ENCODE measurements at regions of chr3 and their contacts with region 1.

Region 1: DNA sequence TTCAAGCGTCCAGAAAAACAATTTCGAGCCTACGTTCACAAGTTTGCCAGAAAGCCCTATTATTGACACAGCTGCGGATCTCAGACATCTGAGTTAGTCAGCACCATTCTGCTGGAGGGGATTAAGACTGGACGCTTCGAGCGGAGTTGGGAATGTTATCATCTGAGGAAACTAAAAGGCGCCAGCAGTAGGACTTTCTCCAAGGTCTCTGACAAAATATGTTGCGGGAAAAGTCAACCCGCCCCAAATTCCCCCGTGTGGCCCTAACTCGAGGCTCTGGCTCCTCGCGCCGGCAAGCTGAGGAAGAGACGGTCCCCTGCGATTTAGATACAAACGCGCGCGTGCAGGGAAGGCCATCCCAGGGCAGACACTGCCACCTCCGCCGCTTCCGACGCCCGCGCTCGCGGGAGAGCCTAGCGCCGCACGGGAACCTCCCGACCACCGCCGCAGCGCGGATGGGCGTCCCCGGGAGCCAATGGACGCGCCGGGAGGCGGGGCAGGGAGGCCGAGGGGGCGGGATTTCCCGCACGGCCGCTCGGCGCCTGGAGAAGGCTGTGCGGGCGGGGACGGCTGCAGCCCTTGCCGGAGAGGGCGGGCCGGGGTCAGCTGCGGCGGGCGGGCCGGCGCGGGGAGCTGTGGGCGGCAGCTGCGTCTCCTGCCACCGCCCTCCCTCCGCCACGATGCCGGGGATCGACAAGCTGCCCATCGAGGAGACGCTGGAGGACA is at the start of gene APPL1:
- DNase-seq: peak; percentile 61 to 93 (median 84)
- ATAC-seq: peak; percentile 88
- H3K4me3 ChIP-seq: peak within 1 kb of the TSS; percentile 80
- H3K4me3 Mint-ChIP-seq: peak within 1 kb of the TSS; percentile 95
- H3K27ac ChIP-seq: no peak within 1 kb of the TSS
- H3K27ac Mint-ChIP-seq: peak within 1 kb of the TSS; percentile 82
- H3K4me1 ChIP-seq: peaks cover 10% of the 10 kb centered on the region
- H3K4me1 Mint-ChIP-seq: peaks cover 33% of the 10 kb centered on the region
- H3K27me3 ChIP-seq: no peaks in the 10 kb centered on the region
- H3K27me3 Mint-ChIP-seq: no peaks in the 10 kb centered on the region
- CTCF ChIP-seq: no peak
- total RNA-seq, gene APPL1: 21.3 to 22.9 TPM

Region 2: GRCh38 chr3:56693750-56694149 is 533.6 kb before region 1 on chr3:
- CTCF ChIA-PET with region 1: no interaction called
- POLR2A ChIA-PET with region 1: no interaction called
- intact Hi-C with region 1: loop called in 1 of 2 experiments (anchors 2 kb)
- DNase-seq: peak in 3 of 14 experiments; percentile 30 to 34 (median 32)
- ATAC-seq: no peak
- H3K4me3 ChIP-seq: no peak overlapping the region
- H3K4me3 Mint-ChIP-seq: peak overlapping the region; percentile 61
- H3K27ac ChIP-seq: peak overlapping the region; percentile 16 to 42
- H3K27ac Mint-ChIP-seq: peak overlapping the region; percentile 76
- H3K4me1 ChIP-seq: peaks cover 30% of the 10 kb centered on the region
- H3K4me1 Mint-ChIP-seq: peaks cover 44% of the 10 kb centered on the region
- H3K27me3 ChIP-seq: no peaks in the 10 kb centered on the region
- H3K27me3 Mint-ChIP-seq: no peaks in the 10 kb centered on the region
- CTCF ChIP-seq: no peak

Region 3: DNA sequence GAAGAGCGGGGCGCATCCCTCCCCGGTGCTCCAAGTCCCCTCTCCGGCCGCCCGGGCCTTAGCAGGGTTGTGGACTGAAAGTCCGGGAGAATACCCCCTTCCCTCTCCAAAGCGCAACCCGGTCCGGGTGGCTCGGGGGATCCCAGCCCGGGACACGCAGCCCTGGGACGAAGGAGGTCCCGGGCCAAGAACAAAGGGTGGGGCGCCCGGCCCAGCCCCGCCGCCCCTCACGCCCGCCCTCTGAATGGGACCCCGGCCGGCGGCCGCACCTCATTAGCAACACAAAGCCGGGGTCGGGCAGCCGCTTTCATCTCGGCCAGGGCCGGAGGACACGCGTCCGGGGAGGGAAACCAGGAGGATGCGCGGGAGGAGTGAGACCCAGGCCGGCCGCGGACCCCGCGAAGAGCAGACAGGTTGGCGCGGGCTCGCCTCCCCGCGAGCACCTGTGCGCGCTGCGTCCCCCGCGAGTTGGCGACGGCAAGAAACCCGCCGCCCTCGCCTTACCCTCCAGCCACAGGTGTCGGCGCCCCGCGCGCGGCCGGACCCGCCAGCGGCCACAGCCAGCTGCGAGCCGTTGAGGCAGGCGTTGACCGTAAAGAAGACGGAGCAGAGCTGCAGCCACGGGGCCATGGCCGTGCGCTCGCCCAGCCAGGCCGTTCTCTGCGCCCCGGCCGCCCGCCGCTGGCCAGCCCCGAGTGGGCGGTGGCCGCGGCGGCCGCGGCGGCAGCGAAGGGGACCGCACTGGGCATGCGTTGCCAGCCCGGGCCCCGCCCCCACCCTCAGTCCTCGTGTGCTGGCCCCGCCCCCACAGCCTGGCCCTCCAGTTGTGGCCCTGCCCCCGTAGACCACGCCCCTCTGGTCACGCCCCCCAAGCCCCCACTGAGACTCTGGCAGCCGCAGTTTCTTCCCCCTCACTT is 62.5 kb before region 1 on chr3 and contains the start of gene IL17RD:
- CTCF ChIA-PET with region 1: no interaction called
- POLR2A ChIA-PET with region 1: no interaction called
- intact Hi-C with region 1: no loop called
- DNase-seq: peak in 10 of 14 experiments; percentile 8 to 75 (median 20)
- ATAC-seq: peak; percentile 32
- H3K4me3 ChIP-seq: peak within 1 kb of the TSS; percentile 37
- H3K4me3 Mint-ChIP-seq: peak within 1 kb of the TSS; percentile 86
- H3K27ac ChIP-seq: no peak within 1 kb of the TSS
- H3K27ac Mint-ChIP-seq: no peak within 1 kb of the TSS
- H3K4me1 ChIP-seq: peaks cover 17% of the 10 kb centered on the region
- H3K4me1 Mint-ChIP-seq: peaks cover 20% of the 10 kb centered on the region
- H3K27me3 ChIP-seq: peaks cover 42 to 70% of the 10 kb centered on the region in 2 experiments
- H3K27me3 Mint-ChIP-seq: peaks cover 86% of the 10 kb centered on the region
- CTCF ChIP-seq: no peak
- total RNA-seq, gene IL17RD: not detected

Measured in CD4-positive, alpha-beta T cell (primary cell).